ENCODE measurements at regions of chr5 and their contacts with region 1.

Region 1: GRCh38 chr5:150449517-150450339 is at the start of gene RPS14:
- DNase-seq: peak; percentile 92
- ATAC-seq: peak; percentile 92
- H3K4me3 ChIP-seq: peak within 1 kb of the TSS; percentile 81
- H3K27ac ChIP-seq: peak within 1 kb of the TSS; percentile 97
- H3K4me1 ChIP-seq: peaks cover 4% of the 10 kb centered on the region
- H3K27me3 ChIP-seq: no peaks in the 10 kb centered on the region
- CTCF ChIP-seq: peak; percentile 88
- POLR2A ChIP-seq: peak; percentile 91
- RAD21 ChIP-seq: peak; percentile 51
- total RNA-seq, gene RPS14: 7,310 and 7,583 TPM in 2 replicates

Region 2: DNA sequence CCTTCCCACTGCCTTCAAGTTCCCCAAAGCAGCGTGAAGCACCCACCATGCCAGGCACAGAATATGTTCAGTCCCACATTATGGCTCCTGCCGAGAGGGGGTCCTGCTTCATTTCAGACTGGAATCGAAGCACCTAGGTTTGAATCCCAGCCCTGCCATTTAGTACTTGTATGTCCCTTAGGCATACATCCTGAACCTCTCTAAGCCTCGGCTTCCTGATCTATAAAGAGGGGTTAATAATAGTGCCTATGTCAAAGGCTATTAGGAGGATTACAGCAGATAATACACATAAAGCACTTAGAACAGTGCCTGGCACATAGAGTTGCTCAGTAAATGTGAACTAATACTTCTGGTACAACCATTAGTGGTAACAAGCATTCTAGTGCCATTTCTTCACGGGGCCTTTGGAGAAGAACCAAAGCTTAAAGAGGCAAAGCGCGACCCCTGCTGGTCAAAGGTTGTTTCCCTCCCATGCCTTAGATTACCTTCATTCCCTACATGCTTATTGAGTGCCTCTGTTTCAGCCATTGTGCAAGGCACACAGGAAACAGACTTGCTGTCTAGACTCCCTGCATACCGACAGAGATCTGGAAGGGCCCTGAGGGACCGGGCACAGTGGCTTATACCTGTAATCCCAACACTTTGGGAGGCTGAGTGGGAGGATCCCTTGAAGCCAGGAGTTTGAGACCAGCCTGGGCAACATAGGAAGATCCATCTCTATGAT is 621.4 kb before region 1 on chr5:
- CTCF ChIA-PET with region 1: no interaction called
- POLR2A ChIA-PET with region 1: no interaction called
- dilution Hi-C with region 1: no loop called
- in situ Hi-C with region 1: loop called (anchors 25 kb)
- intact Hi-C with region 1: no loop called
- DNase-seq: peak; percentile 91
- ATAC-seq: peak; percentile 93
- H3K4me3 ChIP-seq: no peak overlapping the region
- H3K27ac ChIP-seq: no peak overlapping the region
- H3K4me1 ChIP-seq: no peaks in the 10 kb centered on the region
- H3K27me3 ChIP-seq: peaks cover 2% of the 10 kb centered on the region; the same call in 1 of the 2 replicates
- CTCF ChIP-seq: peak; percentile 95
- POLR2A ChIP-seq: no peak
- RAD21 ChIP-seq: peak; percentile 96

Region 3: GRCh38 chr5:150656191-150657132 is 206.7 kb after region 1 on chr5:
- CTCF ChIA-PET with region 1: no interaction called
- POLR2A ChIA-PET with region 1: no interaction called
- dilution Hi-C with region 1: no loop called
- in situ Hi-C with region 1: loop called (anchors 5 kb)
- intact Hi-C with region 1: no loop called
- DNase-seq: no peak
- ATAC-seq: peak; percentile 40
- H3K4me3 ChIP-seq: peak overlapping the region; percentile 59
- H3K27ac ChIP-seq: peak overlapping the region; percentile 56; the same call in 1 of the 2 replicates
- H3K4me1 ChIP-seq: peaks cover 40% of the 10 kb centered on the region
- H3K27me3 ChIP-seq: no peaks in the 10 kb centered on the region; the same call in 1 of the 2 replicates
- CTCF ChIP-seq: peak; percentile 65
- POLR2A ChIP-seq: no peak
- RAD21 ChIP-seq: peak; percentile 72